ENCODE measurements at regions of chr19 and their contacts with region 1.

Region 1: GRCh38 chr19:47256688-47257443 is 541 bp downstream of the CCDC9 start:
- DNase-seq: peak; percentile 99
- ATAC-seq: peak; percentile 82
- H3K4me3 Mint-ChIP-seq: peak overlapping the region; percentile 93
- H3K27ac Mint-ChIP-seq: peak overlapping the region; percentile 92
- H3K4me1 Mint-ChIP-seq: peaks cover 39% of the 10 kb centered on the region
- H3K27me3 Mint-ChIP-seq: no peaks in the 10 kb centered on the region
- CTCF ChIP-seq: no peak

Region 2: GRCh38 chr19:46860125-46860845 is 396.6 kb before region 1 on chr19:
- CTCF ChIA-PET with region 1: no interaction called
- POLR2A ChIA-PET with region 1: interaction called, 3 read pairs
- intact Hi-C with region 1: loop called (anchors 2 kb)
- DNase-seq: peak; percentile 87
- ATAC-seq: peak; percentile 79
- H3K4me3 Mint-ChIP-seq: peak overlapping the region; percentile 92
- H3K27ac Mint-ChIP-seq: peak overlapping the region; percentile 92
- H3K4me1 Mint-ChIP-seq: peaks cover 26% of the 10 kb centered on the region
- H3K27me3 Mint-ChIP-seq: no peaks in the 10 kb centered on the region
- CTCF ChIP-seq: no peak

Region 3: GRCh38 chr19:47190167-47190727 is 66.6 kb before region 1 on chr19:
- CTCF ChIA-PET with region 1: no interaction called
- POLR2A ChIA-PET with region 1: interaction called, 11 read pairs
- intact Hi-C with region 1: no loop called
- DNase-seq: no peak
- ATAC-seq: no peak
- H3K4me3 Mint-ChIP-seq: no peak overlapping the region
- H3K27ac Mint-ChIP-seq: no peak overlapping the region
- H3K4me1 Mint-ChIP-seq: peaks cover 20% of the 10 kb centered on the region
- H3K27me3 Mint-ChIP-seq: no peaks in the 10 kb centered on the region
- CTCF ChIP-seq: no peak

Region 4: GRCh38 chr19:47225746-47226425 is 31.0 kb before region 1 on chr19:
- CTCF ChIA-PET with region 1: interaction called, 5 read pairs
- POLR2A ChIA-PET with region 1: interaction called, 64 read pairs
- intact Hi-C with region 1: loop called (anchors 1 kb)
- DNase-seq: peak; percentile 94
- ATAC-seq: peak; percentile 61
- H3K4me3 Mint-ChIP-seq: peak overlapping the region; percentile 85
- H3K27ac Mint-ChIP-seq: peak overlapping the region; percentile 89
- H3K4me1 Mint-ChIP-seq: peaks cover 16% of the 10 kb centered on the region
- H3K27me3 Mint-ChIP-seq: no peaks in the 10 kb centered on the region
- CTCF ChIP-seq: no peak

Region 5: DNA sequence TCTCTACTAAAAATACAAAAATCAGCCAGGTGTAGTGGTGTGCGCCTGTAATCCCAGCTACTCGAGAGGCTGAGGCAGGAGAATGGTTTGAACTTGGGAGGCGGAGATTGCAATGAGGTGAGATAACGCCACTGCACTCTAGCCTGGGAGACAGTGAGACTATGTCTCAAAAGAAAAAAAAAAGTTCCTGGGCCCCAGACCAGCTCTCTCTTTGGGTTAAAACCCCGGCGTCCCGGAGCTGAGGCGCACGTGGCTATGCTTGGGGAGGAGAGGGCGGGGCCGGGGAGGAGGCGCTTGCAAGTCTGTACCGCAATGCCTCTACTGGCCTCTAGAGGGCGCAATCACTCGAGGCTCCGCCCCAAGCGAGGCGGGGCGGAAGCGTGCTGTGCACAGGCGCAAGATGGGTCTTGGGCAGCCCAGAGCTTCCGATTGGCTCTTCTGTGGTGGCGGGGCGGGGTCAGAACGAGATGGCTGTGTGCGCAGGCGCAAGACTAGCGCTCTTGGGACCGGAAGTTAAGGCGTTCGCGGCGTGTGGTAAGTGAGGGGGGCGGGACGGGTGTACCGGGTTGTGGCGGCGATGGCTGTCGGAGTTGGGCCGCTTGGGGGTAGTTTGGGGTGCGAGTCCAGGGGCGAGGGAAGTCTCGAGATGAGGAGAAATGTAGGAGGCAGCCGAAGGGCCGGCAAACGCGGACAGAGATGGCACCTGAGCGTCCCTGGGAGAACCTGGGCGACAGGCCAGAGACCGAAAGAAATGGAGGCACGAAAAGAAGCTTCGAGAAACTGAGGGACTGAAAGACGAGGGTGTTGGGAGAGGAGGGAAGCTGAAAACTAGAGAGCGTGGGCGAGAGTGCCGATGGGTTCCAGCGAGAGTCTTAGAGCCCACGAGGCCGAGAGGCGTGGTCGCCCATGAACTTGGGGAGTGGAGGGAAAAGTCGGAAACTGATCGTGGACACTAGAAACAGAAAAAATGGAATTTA is 92.2 kb after region 1 on chr19 and contains the start of gene DHX34:
- CTCF ChIA-PET with region 1: interaction called, 4 read pairs
- POLR2A ChIA-PET with region 1: interaction called, 11 read pairs
- intact Hi-C with region 1: loop called (anchors 2 kb)
- DNase-seq: peak; percentile 99
- ATAC-seq: peak; percentile 98
- H3K4me3 Mint-ChIP-seq: peak within 1 kb of the TSS; percentile 98
- H3K27ac Mint-ChIP-seq: peak within 1 kb of the TSS; percentile 90
- H3K4me1 Mint-ChIP-seq: peaks cover 40% of the 10 kb centered on the region
- H3K27me3 Mint-ChIP-seq: no peaks in the 10 kb centered on the region
- CTCF ChIP-seq: peak; percentile 65
- total RNA-seq, gene DHX34: 17.4 and 20.0 TPM in 2 replicates